Endothelial cell of umbilical vein (primary cell): ENCODE measurements at regions of chr19 and their contacts with region 1.

Region 1: DNA sequence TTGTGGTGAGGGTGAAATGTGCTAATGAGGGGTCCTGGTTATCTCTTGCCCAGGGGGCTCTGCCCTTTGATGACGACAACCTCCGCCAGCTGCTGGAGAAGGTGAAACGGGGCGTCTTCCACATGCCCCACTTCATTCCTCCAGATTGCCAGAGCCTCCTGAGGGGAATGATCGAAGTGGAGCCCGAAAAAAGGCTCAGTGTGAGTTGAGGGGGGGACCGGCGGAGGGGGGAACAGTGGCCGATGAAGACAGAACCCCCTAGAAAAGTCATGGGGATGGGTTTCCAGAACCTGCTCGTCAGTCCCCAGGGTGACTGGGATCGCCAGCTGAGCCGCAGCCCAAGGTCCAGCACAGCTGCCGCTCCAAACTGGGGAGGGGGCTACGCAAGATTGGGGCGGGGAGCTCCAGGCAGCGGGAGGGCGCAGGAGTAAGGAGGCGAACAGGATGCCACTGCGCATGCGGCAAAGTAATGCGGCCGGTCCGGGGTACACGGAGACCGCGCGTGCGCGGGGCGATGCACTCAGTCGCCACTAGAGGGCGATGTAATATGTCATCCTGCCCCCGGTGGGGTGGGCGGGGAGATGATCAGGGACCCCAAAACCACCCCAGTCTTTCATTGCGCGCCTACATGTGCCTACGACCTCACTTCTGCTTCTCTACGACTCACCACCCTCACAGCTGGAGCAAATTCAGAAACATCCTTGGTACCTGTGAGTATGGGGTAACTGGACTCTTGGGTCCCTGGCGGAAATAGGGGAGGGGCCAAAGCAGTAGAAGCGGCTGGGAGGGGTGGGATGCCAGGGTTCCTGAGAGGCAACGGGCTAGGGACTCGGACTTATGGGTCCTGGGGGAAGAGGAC is 17.9 kb downstream of the BRSK1 start:
- DNase-seq: peak; percentile 81
- H3K4me3 ChIP-seq: peak overlapping the region in 2 of 3 experiments; percentile 26 to 28
- H3K27ac ChIP-seq: no peak overlapping the region
- H3K4me1 ChIP-seq: no peaks in the 10 kb centered on the region
- H3K27me3 ChIP-seq: peaks cover 0 to 3% of the 10 kb centered on the region in 2 experiments
- CTCF ChIP-seq: peak; percentile 89 to 95
- POLR2A ChIP-seq: no peak

Region 2: DNA sequence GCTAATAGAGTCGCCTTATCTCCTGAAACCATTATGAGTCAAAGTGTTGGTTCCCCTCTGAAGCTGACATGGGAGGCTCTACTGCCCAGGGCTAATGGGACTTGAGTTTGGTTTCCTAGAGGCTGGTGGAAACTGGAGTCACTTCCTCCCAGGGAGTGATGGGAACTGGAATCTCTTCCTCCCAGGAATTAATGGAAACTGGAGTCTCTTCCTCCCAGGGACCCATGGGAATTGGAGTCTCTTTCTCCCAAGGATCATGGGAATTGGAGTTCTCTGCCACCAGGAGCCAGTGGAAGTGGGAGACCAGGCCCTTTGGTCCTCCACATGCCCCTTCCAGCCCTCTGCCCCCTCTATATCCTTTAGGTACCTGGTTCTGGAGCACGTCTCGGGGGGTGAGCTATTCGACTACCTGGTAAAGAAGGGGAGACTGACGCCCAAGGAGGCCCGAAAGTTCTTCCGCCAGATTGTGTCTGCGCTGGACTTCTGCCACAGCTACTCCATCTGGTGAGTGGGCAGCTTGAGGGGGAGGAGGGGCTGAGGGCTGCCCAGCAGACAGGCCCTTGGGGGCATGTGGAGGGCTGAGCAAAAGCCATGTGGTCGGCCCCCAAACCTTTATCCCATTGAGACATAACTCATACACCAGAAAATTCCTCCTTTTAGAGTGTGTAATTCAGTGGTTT is 12.4 kb before region 1 on chr19:
- CTCF ChIA-PET with region 1: interaction called, 25 read pairs
- POLR2A ChIA-PET with region 1: no interaction called
- dilution Hi-C with region 1: no loop called
- intact Hi-C with region 1: no loop called
- DNase-seq: no peak
- H3K4me3 ChIP-seq: no peak overlapping the region
- H3K27ac ChIP-seq: no peak overlapping the region
- H3K4me1 ChIP-seq: no peaks in the 10 kb centered on the region
- H3K27me3 ChIP-seq: no peaks in the 10 kb centered on the region
- CTCF ChIP-seq: no peak
- POLR2A ChIP-seq: no peak

Region 3: GRCh38 chr19:55312621-55313512 is 11.2 kb after region 1 on chr19:
- CTCF ChIA-PET with region 1: interaction called, 18 read pairs
- POLR2A ChIA-PET with region 1: no interaction called
- dilution Hi-C with region 1: no loop called
- intact Hi-C with region 1: no loop called
- DNase-seq: no peak
- H3K4me3 ChIP-seq: no peak overlapping the region
- H3K27ac ChIP-seq: no peak overlapping the region
- H3K4me1 ChIP-seq: no peaks in the 10 kb centered on the region
- H3K27me3 ChIP-seq: no peaks in the 10 kb centered on the region
- CTCF ChIP-seq: no peak
- POLR2A ChIP-seq: no peak

Region 4: DNA sequence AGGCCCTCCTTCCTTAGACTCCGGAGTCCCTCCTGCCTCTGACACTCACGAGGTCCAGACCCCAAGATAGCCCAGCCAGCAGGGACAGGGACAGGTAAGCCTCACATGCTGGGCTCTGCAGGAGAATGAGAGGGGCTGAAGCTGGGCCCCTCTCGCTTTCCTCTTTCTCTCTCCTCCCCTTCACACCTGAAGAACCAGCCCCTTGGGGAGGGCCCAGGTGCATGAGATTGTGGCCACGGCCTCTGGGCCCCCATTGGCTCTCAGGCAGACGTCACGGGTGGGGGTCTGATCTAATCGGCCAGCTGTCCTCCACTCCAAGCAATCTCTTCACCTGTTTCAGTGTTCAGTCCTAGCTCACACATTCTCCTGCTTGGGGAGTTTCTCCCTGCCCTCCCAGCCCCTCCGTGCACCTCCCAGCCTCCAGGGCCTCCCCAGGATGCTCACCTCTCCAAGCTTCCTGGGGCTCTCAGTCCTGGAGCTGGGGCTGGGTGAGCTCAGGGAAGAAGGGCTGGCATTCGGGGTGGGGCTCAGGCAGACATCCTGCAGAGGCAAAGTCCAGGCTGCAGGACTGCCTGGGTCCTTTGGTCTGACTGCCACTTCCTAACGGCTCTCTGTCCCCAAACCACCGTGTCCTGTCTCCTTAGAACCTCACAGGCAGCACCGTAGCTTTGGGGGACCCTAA is 20.7 kb after region 1 on chr19:
- CTCF ChIA-PET with region 1: interaction called, 17 read pairs
- POLR2A ChIA-PET with region 1: no interaction called
- dilution Hi-C with region 1: no loop called
- intact Hi-C with region 1: no loop called
- DNase-seq: no peak
- H3K4me3 ChIP-seq: no peak overlapping the region
- H3K27ac ChIP-seq: no peak overlapping the region
- H3K4me1 ChIP-seq: no peaks in the 10 kb centered on the region
- H3K27me3 ChIP-seq: peaks cover 0 to 2% of the 10 kb centered on the region in 2 experiments
- CTCF ChIP-seq: no peak
- POLR2A ChIP-seq: no peak

Region 5: DNA sequence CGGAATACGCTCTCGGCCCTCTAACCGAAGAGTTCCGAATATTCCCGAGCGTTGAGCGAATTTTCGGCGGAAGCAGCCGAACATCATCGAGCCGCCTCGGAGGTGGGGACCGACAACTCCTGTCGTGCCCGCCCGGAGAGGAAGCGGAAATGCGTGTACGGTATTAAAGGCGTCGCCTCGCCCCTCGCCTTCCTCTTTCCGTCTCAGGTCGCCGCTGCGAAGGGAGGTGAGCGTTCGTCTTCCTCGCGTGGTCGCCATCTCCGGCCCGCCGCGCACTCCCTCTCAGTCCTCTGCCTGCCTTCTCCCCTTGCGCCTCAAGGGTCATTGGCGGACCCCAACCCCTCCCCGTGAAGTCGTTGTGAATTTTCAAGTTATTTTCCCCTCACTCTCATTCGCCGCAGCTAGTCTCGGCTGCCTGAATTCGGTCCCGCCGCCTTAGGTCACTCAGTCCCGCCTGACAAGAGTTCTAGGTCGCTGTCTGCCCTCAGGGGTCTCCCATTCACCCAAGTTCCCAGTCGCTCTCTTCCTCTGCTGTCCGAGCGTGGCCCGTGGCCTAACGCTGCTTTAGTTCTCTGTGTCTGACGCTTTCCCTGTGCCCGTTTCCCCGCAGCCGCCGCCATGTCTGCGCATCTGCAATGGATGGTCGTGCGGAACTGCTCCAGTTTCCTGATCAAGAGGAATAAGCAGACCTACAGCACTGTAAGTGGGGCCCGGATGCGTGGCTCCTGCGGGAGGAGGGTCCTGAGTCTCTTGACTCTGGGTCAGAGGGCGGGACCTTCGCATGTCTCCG is 84.2 kb after region 1 on chr19 and contains the start of gene RPL28:
- CTCF ChIA-PET with region 1: interaction called, 51 read pairs
- POLR2A ChIA-PET with region 1: no interaction called
- dilution Hi-C with region 1: no loop called
- intact Hi-C with region 1: loop called (anchors 1 kb)
- DNase-seq: peak; percentile 99
- H3K4me3 ChIP-seq: peak within 1 kb of the TSS; percentile 33 to 69 (median 67)
- H3K27ac ChIP-seq: peak within 1 kb of the TSS; percentile 75
- H3K4me1 ChIP-seq: peaks cover 31% of the 10 kb centered on the region
- H3K27me3 ChIP-seq: no peaks in the 10 kb centered on the region
- CTCF ChIP-seq: no peak
- POLR2A ChIP-seq: peak; percentile 100
- total RNA-seq, gene RPL28: 1,738 and 1,872 TPM in 2 replicates

Region 6: GRCh38 chr19:55407800-55408532 is 106.3 kb after region 1 on chr19:
- CTCF ChIA-PET with region 1: interaction called, 4 read pairs
- POLR2A ChIA-PET with region 1: interaction called, 4 read pairs
- dilution Hi-C with region 1: no loop called
- intact Hi-C with region 1: loop called (anchors 1 kb)
- DNase-seq: peak; percentile 100
- H3K4me3 ChIP-seq: peak overlapping the region in 2 of 3 experiments; percentile 28 to 90
- H3K27ac ChIP-seq: peak overlapping the region; percentile 90
- H3K4me1 ChIP-seq: peaks cover 13% of the 10 kb centered on the region
- H3K27me3 ChIP-seq: peaks cover 2 to 5% of the 10 kb centered on the region in 2 experiments
- CTCF ChIP-seq: no peak
- POLR2A ChIP-seq: peak; percentile 58

Region 7: DNA sequence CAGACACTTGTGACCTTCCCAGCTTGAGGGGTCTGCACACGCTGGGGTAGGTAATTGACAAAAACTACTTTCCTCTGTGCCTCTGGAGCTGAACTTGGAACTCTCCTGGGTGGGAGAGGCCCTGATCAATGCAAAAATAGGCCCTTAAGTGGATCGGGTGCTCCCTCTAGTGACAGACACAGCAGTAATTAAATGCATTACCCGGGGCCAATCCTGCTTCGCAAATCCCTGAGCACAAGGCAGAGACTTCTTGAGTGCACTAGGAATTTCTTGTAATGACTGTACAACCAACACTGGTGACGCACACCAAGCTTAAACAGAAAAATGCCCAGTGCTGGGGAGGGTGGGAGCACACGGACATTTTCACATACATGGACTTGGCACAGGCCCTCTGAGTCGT is 116.5 kb after region 1 on chr19:
- CTCF ChIA-PET with region 1: interaction called, 7 read pairs
- POLR2A ChIA-PET with region 1: no interaction called
- dilution Hi-C with region 1: no loop called
- intact Hi-C with region 1: loop called (anchors 1 kb)
- DNase-seq: peak; percentile 71
- H3K4me3 ChIP-seq: no peak overlapping the region
- H3K27ac ChIP-seq: no peak overlapping the region
- H3K4me1 ChIP-seq: no peaks in the 10 kb centered on the region
- H3K27me3 ChIP-seq: peaks cover 0 to 5% of the 10 kb centered on the region in 2 experiments
- CTCF ChIP-seq: peak; percentile 64 to 71
- POLR2A ChIP-seq: no peak